Upper lobe of right lung (tissue), 1 donor: ENCODE measurements at regions of chr19 and their contacts with region 1.

Region 1: GRCh38 chr19:15555759-15556633 is 47.7 kb downstream of the CYP4F22 start:
- DNase-seq: peak; percentile 94
- ATAC-seq: peak; percentile 95
- H3K4me3 ChIP-seq: peak overlapping the region; percentile 35
- H3K27ac ChIP-seq: no peak overlapping the region
- H3K4me1 ChIP-seq: peaks cover 9% of the 10 kb centered on the region
- H3K27me3 ChIP-seq: peaks cover 16% of the 10 kb centered on the region
- CTCF ChIP-seq: peak; percentile 75

Region 2: GRCh38 chr19:15091901-15092753 is 463.9 kb before region 1 on chr19:
- intact Hi-C with region 1: loop called (anchors 10 kb)
- DNase-seq: no peak
- ATAC-seq: peak; percentile 72
- H3K4me3 ChIP-seq: no peak overlapping the region
- H3K27ac ChIP-seq: no peak overlapping the region
- H3K4me1 ChIP-seq: no peaks in the 10 kb centered on the region
- H3K27me3 ChIP-seq: peaks cover 6% of the 10 kb centered on the region
- CTCF ChIP-seq: peak; percentile 68

Region 3: GRCh38 chr19:15177269-15178116 is 378.5 kb before region 1 on chr19:
- intact Hi-C with region 1: loop called (anchors 10 kb)
- DNase-seq: peak; percentile 91
- ATAC-seq: peak; percentile 92
- H3K4me3 ChIP-seq: no peak overlapping the region
- H3K27ac ChIP-seq: no peak overlapping the region
- H3K4me1 ChIP-seq: peaks cover 3% of the 10 kb centered on the region
- H3K27me3 ChIP-seq: no peaks in the 10 kb centered on the region
- CTCF ChIP-seq: peak; percentile 94

Region 4: DNA sequence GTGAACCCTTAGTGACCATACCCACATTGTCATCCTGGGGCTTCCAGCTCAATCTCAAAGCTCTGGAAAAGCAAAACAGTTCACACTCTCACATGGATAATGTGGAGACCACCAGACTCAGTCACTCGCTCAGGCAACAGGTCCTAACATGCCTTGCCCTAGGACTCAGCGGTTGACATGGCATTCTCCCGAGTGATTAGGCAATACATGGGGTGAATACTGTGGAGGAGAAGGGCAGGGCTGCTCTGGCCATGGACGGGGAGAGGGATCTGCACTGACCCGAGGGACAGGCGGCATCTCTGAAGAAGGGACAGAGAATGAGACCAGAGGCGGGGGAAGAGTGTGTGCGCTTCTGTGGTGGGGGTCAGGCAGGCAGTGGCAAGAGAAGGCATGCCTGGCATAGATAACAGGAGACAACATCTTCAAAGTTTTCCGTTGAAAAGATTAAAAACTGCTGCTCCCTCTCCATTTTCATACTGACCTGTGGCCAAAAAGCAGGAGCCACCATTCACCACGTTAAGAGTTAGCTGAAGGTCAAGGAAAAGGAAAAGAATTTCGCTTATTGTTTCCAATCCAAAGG is 279.3 kb before region 1 on chr19:
- intact Hi-C with region 1: loop called (anchors 5 kb)
- DNase-seq: no peak
- ATAC-seq: peak; percentile 38
- H3K4me3 ChIP-seq: no peak overlapping the region
- H3K27ac ChIP-seq: peak overlapping the region; percentile 36
- H3K4me1 ChIP-seq: peaks cover 86% of the 10 kb centered on the region
- H3K27me3 ChIP-seq: no peaks in the 10 kb centered on the region
- CTCF ChIP-seq: no peak

Region 5: DNA sequence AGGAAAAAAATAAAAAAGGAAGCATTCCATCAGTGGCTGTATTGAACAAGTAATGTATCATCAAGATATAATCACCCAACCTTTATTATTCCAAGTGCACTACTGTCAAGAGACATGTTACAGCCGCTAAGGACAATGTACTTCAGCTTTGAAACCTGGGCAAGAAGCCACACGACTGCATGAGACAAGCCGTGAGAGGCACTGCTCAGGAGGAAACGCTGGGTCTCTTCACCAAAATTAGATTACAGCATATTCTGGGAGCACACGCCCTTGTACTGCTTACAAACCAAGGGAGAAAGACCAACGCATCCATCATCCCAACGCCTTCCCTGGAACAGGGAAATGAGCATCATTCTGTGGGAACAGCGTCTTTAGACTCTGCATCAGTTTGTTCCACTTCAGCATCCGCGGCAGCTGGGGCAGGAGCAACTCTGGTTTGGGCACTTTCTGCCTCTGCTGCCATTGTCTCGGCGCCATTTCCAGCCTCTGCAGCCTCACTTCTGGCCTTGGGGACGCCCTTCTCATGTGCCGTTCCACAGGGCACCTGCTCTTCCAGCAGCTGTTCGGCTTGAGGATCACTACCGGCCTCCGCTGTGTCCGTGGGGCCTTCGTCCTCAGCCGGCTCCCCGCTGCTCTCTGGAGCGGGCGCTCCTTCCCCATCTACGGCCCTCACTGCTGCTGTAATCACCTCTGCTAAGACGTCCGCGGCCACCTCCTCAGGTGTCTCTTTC is 201.3 kb before region 1 on chr19:
- intact Hi-C with region 1: no loop called
- DNase-seq: no peak
- ATAC-seq: no peak
- H3K4me3 ChIP-seq: no peak overlapping the region
- H3K27ac ChIP-seq: no peak overlapping the region
- H3K4me1 ChIP-seq: no peaks in the 10 kb centered on the region
- H3K27me3 ChIP-seq: no peaks in the 10 kb centered on the region
- CTCF ChIP-seq: no peak